HEK293 (cell line): ENCODE measurements at regions of chr6 and their contacts with region 1.

Region 1: GRCh38 chr6:21593412-21593926 is at the start of gene SOX4:
- H3K4me3 ChIP-seq: peak within 1 kb of the TSS; percentile 55
- H3K27ac ChIP-seq: peak within 1 kb of the TSS; percentile 99
- H3K4me1 ChIP-seq: peaks cover 12% of the 10 kb centered on the region
- CTCF ChIP-seq: no peak

Region 2: GRCh38 chr6:20877008-20877937 is 716.2 kb before region 1 on chr6:
- CTCF ChIA-PET with region 1: interaction called, 14 read pairs
- POLR2A ChIA-PET with region 1: interaction called, 12 read pairs
- H3K4me3 ChIP-seq: no peak overlapping the region
- H3K27ac ChIP-seq: no peak overlapping the region
- H3K4me1 ChIP-seq: peaks cover 14% of the 10 kb centered on the region
- CTCF ChIP-seq: no peak

Region 3: GRCh38 chr6:21610341-21610740 is 16.9 kb after region 1 on chr6:
- CTCF ChIA-PET with region 1: no interaction called
- POLR2A ChIA-PET with region 1: interaction called, 15 read pairs
- H3K4me3 ChIP-seq: no peak overlapping the region
- H3K27ac ChIP-seq: no peak overlapping the region
- H3K4me1 ChIP-seq: peaks cover 13% of the 10 kb centered on the region
- CTCF ChIP-seq: no peak

Region 4: GRCh38 chr6:21748343-21749056 is 155.0 kb after region 1 on chr6:
- CTCF ChIA-PET with region 1: interaction called, 7 read pairs
- POLR2A ChIA-PET with region 1: interaction called, 141 read pairs
- H3K4me3 ChIP-seq: no peak overlapping the region
- H3K27ac ChIP-seq: peak overlapping the region; percentile 83
- H3K4me1 ChIP-seq: peaks cover 49% of the 10 kb centered on the region
- CTCF ChIP-seq: no peak

Region 5: DNA sequence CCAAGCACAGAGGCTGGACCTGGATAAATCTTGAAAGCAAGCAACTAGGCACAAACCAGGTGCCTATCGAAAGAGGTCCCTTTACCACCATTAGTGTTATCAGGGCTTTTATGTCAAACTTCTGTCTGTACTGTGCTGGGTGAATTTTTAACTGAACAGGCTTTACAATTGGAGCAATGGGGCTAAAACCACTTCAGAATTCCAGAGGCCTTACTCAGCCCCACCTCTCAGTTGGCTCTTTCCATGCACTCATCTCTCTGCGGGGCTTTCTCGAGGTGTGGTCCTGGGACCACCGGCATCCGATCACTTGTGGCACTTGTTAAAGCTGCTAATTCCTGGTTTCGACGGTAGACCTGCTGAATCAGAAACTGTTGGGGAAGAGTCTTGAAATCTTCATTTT is 232.6 kb after region 1 on chr6:
- CTCF ChIA-PET with region 1: no interaction called
- POLR2A ChIA-PET with region 1: interaction called, 26 read pairs
- H3K4me3 ChIP-seq: no peak overlapping the region
- H3K27ac ChIP-seq: peak overlapping the region; percentile 47
- H3K4me1 ChIP-seq: peaks cover 28% of the 10 kb centered on the region
- CTCF ChIP-seq: no peak

Region 6: DNA sequence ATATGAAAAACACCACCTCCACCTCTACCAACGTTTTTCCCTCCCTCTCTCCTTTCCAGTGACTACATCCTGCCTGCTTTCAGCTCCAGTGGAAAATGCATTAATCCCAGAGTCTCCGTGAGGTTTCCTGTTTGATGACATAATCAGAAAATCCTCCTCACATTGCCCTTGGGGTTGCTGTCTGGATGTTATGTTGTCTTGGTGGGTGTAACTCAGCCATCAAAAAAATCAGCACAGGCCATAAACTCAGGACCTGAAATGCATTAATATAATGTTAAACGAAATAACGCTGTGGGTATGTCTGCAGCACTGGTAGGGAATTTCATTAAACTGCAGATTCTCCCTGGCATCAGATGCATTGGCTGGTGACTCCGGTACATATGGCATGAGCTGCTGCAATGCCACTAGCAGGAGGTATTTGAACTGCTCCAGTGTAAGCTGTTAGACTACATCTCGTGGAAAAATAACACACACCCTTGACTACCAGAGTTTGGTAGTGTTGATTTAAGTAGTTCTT is 405.6 kb after region 1 on chr6:
- CTCF ChIA-PET with region 1: interaction called, 3 read pairs
- POLR2A ChIA-PET with region 1: interaction called, 27 read pairs
- H3K4me3 ChIP-seq: no peak overlapping the region
- H3K27ac ChIP-seq: no peak overlapping the region; the same call in 1 of the 2 replicates
- H3K4me1 ChIP-seq: peaks cover 26% of the 10 kb centered on the region
- CTCF ChIP-seq: no peak